ENCODE measurements at regions of chr4 and their contacts with region 1.

Region 1: GRCh38 chr4:36187723-36188333 is 56.5 kb downstream of the ARAP2 start:
- DNase-seq: no peak
- H3K4me3 Mint-ChIP-seq: no peak overlapping the region
- H3K27ac Mint-ChIP-seq: no peak overlapping the region
- H3K4me1 Mint-ChIP-seq: peaks cover 39% of the 10 kb centered on the region
- H3K27me3 Mint-ChIP-seq: no peaks in the 10 kb centered on the region

Region 2: GRCh38 chr4:35934320-35934981 is 253.4 kb before region 1 on chr4:
- intact Hi-C with region 1: loop called (anchors 1 kb)
- DNase-seq: no peak
- H3K4me3 Mint-ChIP-seq: no peak overlapping the region
- H3K27ac Mint-ChIP-seq: no peak overlapping the region
- H3K4me1 Mint-ChIP-seq: no peaks in the 10 kb centered on the region
- H3K27me3 Mint-ChIP-seq: peaks cover 9% of the 10 kb centered on the region

Region 3: GRCh38 chr4:36064147-36064546 is 123.7 kb before region 1 on chr4:
- intact Hi-C with region 1: no loop called
- DNase-seq: no peak
- H3K4me3 Mint-ChIP-seq: no peak overlapping the region
- H3K27ac Mint-ChIP-seq: no peak overlapping the region
- H3K4me1 Mint-ChIP-seq: no peaks in the 10 kb centered on the region
- H3K27me3 Mint-ChIP-seq: no peaks in the 10 kb centered on the region

Region 4: GRCh38 chr4:36399762-36400353 is 212.0 kb after region 1 on chr4:
- intact Hi-C with region 1: loop called (anchors 2 kb)
- DNase-seq: peak; percentile 15
- H3K4me3 Mint-ChIP-seq: no peak overlapping the region
- H3K27ac Mint-ChIP-seq: no peak overlapping the region
- H3K4me1 Mint-ChIP-seq: peaks cover 23% of the 10 kb centered on the region
- H3K27me3 Mint-ChIP-seq: peaks cover 9% of the 10 kb centered on the region

Region 5: GRCh38 chr4:36476135-36476534 is 288.3 kb after region 1 on chr4:
- intact Hi-C with region 1: no loop called
- DNase-seq: no peak
- H3K4me3 Mint-ChIP-seq: no peak overlapping the region
- H3K27ac Mint-ChIP-seq: no peak overlapping the region
- H3K4me1 Mint-ChIP-seq: no peaks in the 10 kb centered on the region
- H3K27me3 Mint-ChIP-seq: peaks cover 11% of the 10 kb centered on the region

Region 6: GRCh38 chr4:36758312-36759178 is 570.7 kb after region 1 on chr4:
- intact Hi-C with region 1: no loop called
- DNase-seq: no peak
- H3K4me3 Mint-ChIP-seq: no peak overlapping the region
- H3K27ac Mint-ChIP-seq: no peak overlapping the region
- H3K4me1 Mint-ChIP-seq: no peaks in the 10 kb centered on the region
- H3K27me3 Mint-ChIP-seq: no peaks in the 10 kb centered on the region

Measured in activated T-helper 1 cell treated with anti-CD3 and anti-CD28 coated beads, Interleukin-12 subunit alpha, Interleukin-12 subunit beta, Interleukin-2, Interleukin-4 antibody, amounts not matched to agents 30 ng/mL and 10 ng/mL and 1 ng/mL, durations not matched to agents 14 hours and 24 hours and 36 hours (primary cell).